ENCODE measurements at regions of chr11 and their contacts with region 1.

Region 1: GRCh38 chr11:23540101-23540561 is 679.9 kb upstream of the CCDC179 start:
- DNase-seq: peak; percentile 53
- ATAC-seq: peak; percentile 91
- H3K4me3 ChIP-seq: no peak overlapping the region
- H3K27ac ChIP-seq: peak overlapping the region; percentile 62; the same call in 1 of the 2 replicates
- H3K4me1 ChIP-seq: peaks cover 6% of the 10 kb centered on the region; the same call in 1 of the 2 replicates
- H3K27me3 ChIP-seq: no peaks in the 10 kb centered on the region
- CTCF ChIP-seq: peak; percentile 75
- POLR2A ChIP-seq: no peak
- RAD21 ChIP-seq: peak; percentile 76

Region 2: GRCh38 chr11:22875869-22876473 is 664.2 kb before region 1 on chr11:
- CTCF ChIA-PET with region 1: no interaction called
- POLR2A ChIA-PET with region 1: no interaction called
- dilution Hi-C with region 1: no loop called
- in situ Hi-C with region 1: no loop called
- intact Hi-C with region 1: loop called (anchors 5 kb)
- DNase-seq: peak; percentile 89
- ATAC-seq: peak; percentile 79
- H3K4me3 ChIP-seq: no peak overlapping the region
- H3K27ac ChIP-seq: no peak overlapping the region
- H3K4me1 ChIP-seq: peaks cover 4% of the 10 kb centered on the region
- H3K27me3 ChIP-seq: no peaks in the 10 kb centered on the region
- CTCF ChIP-seq: peak; percentile 99
- POLR2A ChIP-seq: no peak
- RAD21 ChIP-seq: peak; percentile 90

Region 3: DNA sequence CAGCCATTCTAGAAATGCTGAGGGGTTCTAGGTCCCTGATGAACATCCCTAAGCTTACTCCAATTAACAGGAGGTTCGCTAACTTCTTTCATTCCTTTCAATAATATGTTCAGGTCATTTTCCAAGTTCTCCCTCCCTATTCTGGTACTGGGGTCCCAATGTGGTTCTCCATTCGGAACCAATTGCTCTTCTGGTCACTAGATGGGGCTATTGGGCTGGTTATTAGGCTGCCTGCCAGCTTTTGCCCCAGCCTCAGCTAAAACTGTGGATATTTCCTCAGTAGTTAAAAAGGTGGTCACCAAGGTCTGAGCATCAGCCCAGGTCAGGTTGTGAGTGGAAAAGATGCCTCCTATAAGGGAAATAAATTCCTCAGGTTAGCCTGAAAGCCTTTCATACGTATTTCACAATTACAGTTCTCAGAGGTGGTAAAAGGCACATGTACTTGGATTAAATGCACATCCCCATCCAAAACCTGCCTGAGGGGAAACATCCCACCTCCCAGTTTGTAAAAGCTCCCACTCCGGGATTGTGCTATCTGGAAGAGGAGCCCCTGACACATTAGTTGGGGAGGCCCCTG is 518.8 kb before region 1 on chr11:
- CTCF ChIA-PET with region 1: no interaction called
- POLR2A ChIA-PET with region 1: no interaction called
- dilution Hi-C with region 1: no loop called
- in situ Hi-C with region 1: no loop called
- intact Hi-C with region 1: loop called (anchors 10 kb)
- DNase-seq: peak; percentile 51
- ATAC-seq: peak; percentile 86
- H3K4me3 ChIP-seq: no peak overlapping the region
- H3K27ac ChIP-seq: no peak overlapping the region
- H3K4me1 ChIP-seq: 0 out of 2 replicates have a peak, but pooled peaks cover 3% of the 10 kb centered on the region
- H3K27me3 ChIP-seq: no peaks in the 10 kb centered on the region
- CTCF ChIP-seq: peak; percentile 81
- POLR2A ChIP-seq: 0 out of 2 replicates have a peak, but pooled peaks have one; percentile 27
- RAD21 ChIP-seq: peak; percentile 85

Region 4: DNA sequence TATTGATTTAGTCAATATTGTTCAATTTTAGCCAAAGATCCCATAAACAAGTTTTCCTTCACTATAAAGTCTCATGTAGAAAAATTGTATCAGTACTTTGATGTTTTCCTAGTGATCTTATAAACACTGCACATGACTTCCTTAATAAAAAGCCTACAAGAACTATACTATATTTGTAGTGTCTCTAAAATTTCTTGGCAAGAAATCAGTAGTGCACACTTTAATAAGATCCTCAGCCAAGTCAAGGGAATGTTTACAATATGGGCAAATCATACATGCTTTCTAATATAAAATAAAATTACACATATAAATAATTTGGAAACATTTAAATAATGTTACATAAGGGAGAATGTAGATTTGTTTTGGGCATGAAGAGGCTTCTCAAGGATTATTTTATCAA is 476.9 kb before region 1 on chr11:
- CTCF ChIA-PET with region 1: no interaction called
- POLR2A ChIA-PET with region 1: no interaction called
- dilution Hi-C with region 1: no loop called
- in situ Hi-C with region 1: no loop called
- intact Hi-C with region 1: no loop called
- DNase-seq: peak; percentile 3
- ATAC-seq: no peak
- H3K4me3 ChIP-seq: no peak overlapping the region
- H3K27ac ChIP-seq: no peak overlapping the region
- H3K4me1 ChIP-seq: peaks cover 2% of the 10 kb centered on the region; the same call in 1 of the 2 replicates
- H3K27me3 ChIP-seq: no peaks in the 10 kb centered on the region
- CTCF ChIP-seq: no peak
- POLR2A ChIP-seq: no peak
- RAD21 ChIP-seq: no peak

Region 5: DNA sequence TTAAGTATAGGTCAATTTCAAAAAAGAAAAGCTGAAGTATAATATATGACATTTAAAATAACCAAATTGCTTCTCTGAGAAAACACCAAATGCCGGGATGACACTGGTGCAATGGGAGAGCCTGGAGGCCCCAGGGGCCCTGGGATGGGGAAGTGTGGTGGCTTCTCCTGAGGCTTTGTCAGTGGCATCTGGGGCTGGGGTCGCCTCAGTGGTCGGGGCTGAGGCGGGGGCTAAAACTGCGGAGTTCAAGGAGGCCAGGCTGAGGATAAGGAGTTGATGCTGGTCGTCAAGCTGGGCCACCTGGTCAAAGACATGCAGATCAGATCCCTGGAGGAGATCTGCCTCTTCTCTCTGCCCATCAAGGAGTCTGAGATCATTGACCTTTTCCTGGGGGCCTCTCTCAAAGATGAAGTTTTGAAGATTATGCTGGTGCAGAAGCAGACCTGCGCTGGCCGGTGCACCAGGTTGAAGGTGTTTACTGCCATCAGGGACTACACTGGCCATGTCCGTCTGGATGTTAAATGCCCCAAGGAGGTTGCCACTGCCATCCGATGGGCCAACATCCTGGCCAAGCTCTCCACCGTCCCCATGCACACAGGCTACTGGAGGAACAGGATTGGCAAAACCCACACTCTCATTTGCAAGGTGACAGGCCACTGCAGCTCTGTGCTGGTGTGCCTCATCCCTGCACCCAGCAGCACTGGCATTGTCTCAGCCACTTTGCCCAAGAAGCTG is 19.7 kb before region 1 on chr11:
- CTCF ChIA-PET with region 1: no interaction called
- POLR2A ChIA-PET with region 1: no interaction called
- dilution Hi-C with region 1: no loop called
- in situ Hi-C with region 1: no loop called
- intact Hi-C with region 1: no loop called
- DNase-seq: no peak
- ATAC-seq: no peak
- H3K4me3 ChIP-seq: no peak overlapping the region
- H3K27ac ChIP-seq: no peak overlapping the region
- H3K4me1 ChIP-seq: no peaks in the 10 kb centered on the region
- H3K27me3 ChIP-seq: no peaks in the 10 kb centered on the region
- CTCF ChIP-seq: no peak
- POLR2A ChIP-seq: no peak
- RAD21 ChIP-seq: no peak

Region 6: DNA sequence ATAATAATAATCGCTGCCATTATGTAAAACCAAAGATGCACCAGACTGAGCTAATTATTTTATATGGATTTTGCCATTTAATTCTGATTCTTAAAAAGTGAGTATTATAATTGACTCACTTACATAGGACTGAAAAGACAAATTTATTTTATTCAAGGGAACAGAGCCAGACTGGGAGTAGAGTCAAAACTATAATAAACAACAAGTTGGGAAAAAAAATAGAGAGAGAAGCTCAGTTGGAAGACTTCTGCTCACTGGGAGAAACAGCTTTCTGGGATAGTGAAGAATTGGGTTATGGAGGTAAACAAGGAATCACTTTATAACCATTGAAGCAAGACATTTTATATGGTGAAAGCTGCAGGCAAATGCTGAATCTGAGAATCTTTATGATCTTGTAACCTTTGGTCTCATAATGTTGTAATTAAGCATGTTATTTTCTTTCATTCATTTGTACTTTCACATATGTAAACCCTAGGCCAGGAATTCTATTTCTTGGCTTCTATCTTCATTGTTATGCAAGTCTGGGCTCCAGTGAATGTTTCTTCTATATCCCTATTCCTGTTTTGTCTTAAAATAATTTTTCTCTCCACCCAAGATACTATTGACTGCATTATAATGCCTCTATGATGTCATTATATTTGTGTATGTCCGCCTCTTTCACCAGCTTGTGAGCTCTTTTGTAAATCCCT is 45.4 kb after region 1 on chr11:
- CTCF ChIA-PET with region 1: no interaction called
- POLR2A ChIA-PET with region 1: no interaction called
- dilution Hi-C with region 1: no loop called
- in situ Hi-C with region 1: no loop called
- intact Hi-C with region 1: loop called (anchors 5 kb)
- DNase-seq: peak; percentile 2
- ATAC-seq: peak; percentile 32
- H3K4me3 ChIP-seq: no peak overlapping the region
- H3K27ac ChIP-seq: 0 out of 2 replicates have a peak overlapping the region, but pooled peaks have one; percentile 7
- H3K4me1 ChIP-seq: no peaks in the 10 kb centered on the region
- H3K27me3 ChIP-seq: no peaks in the 10 kb centered on the region
- CTCF ChIP-seq: no peak
- POLR2A ChIP-seq: no peak
- RAD21 ChIP-seq: no peak

Region 7: DNA sequence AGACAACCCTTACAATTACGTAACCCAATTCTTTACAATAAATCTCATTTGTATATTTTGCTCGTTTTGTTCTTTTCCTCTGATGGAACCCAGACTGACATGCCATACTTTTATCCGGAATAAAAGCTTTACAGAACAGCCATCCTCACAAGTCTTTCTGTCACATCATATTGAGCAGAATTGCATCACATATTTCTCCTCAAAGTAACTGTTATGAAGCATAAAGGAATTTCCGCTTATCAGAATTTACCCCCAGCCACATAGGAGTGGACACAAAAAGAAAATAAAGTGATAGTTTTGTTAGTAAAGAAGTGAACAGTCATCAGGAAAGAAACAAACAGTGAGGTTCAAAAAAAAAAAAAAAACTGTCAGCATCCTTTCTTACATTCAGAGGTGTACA is 417.2 kb after region 1 on chr11:
- CTCF ChIA-PET with region 1: no interaction called
- POLR2A ChIA-PET with region 1: no interaction called
- dilution Hi-C with region 1: no loop called
- in situ Hi-C with region 1: no loop called
- intact Hi-C with region 1: loop called (anchors 5 kb)
- DNase-seq: peak; percentile 65
- ATAC-seq: no peak
- H3K4me3 ChIP-seq: no peak overlapping the region
- H3K27ac ChIP-seq: no peak overlapping the region
- H3K4me1 ChIP-seq: peaks cover 6% of the 10 kb centered on the region; the same call in 1 of the 2 replicates
- H3K27me3 ChIP-seq: no peaks in the 10 kb centered on the region
- CTCF ChIP-seq: no peak
- POLR2A ChIP-seq: no peak
- RAD21 ChIP-seq: no peak

Region 8: GRCh38 chr11:24234822-24235508 is 694.8 kb after region 1 on chr11:
- CTCF ChIA-PET with region 1: no interaction called
- POLR2A ChIA-PET with region 1: no interaction called
- dilution Hi-C with region 1: no loop called
- in situ Hi-C with region 1: no loop called
- intact Hi-C with region 1: loop called (anchors 5 kb)
- DNase-seq: peak; percentile 79
- ATAC-seq: peak; percentile 64
- H3K4me3 ChIP-seq: no peak overlapping the region
- H3K27ac ChIP-seq: no peak overlapping the region; the same call in 1 of the 2 replicates
- H3K4me1 ChIP-seq: peaks cover 8% of the 10 kb centered on the region
- H3K27me3 ChIP-seq: no peaks in the 10 kb centered on the region
- CTCF ChIP-seq: peak; percentile 56
- POLR2A ChIP-seq: no peak
- RAD21 ChIP-seq: peak; percentile 73

Region 9: DNA sequence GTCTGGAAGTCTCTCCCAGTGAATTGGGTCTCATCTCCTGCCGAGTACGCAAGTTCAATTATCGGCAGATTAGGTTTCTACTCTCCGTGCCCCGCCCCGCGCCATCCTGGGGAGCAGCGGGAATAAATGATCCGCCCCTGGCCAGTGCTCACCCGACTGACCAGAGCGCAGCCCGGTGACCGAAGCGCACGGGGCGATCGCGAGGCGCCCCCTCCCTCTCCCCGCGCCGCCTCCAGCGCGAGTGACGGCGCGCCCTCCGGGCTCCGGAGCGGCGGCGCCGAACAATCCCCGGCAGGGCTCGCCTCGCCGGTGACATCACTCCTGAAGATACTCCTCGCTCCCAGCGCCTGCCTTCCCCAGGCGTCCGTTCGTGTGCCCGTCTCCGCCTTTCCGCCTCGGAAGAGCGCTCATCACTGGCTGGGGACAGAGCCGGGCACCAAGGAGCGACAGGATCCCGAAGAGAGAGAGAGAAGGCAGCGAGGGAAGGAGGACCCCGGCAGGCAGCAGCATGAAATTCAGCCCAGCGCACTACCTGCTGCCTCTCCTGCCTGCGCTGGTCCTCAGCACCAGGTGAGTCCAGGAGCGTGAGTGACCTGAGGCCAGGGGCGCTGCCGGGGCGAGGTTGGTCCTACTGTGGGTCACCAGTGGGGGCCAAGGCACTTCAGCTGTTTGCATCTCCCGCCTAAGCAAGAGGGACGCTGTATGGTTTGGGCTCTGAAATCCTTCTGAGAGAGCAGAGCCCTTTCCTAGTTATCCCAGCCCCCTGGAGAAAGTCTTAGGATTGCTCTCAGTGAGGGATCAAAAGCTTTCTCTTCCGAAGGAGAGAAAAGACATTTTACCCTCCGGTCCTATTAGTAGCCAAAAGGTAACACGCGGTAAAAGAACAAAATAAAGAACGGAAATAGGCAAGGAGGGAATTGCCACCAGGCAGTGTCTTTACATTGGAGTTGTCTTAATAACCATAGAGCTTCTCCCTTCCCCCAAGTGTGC is 956.9 kb after region 1 on chr11 and contains the start of gene LUZP2:
- CTCF ChIA-PET with region 1: no interaction called
- POLR2A ChIA-PET with region 1: no interaction called
- dilution Hi-C with region 1: no loop called
- in situ Hi-C with region 1: loop called (anchors 10 kb)
- intact Hi-C with region 1: no loop called
- DNase-seq: peak; percentile 51
- ATAC-seq: peak; percentile 96
- H3K4me3 ChIP-seq: peak within 1 kb of the TSS; percentile 61
- H3K27ac ChIP-seq: peak within 1 kb of the TSS; percentile 2; the same call in 1 of the 2 replicates
- H3K4me1 ChIP-seq: no peaks in the 10 kb centered on the region; the same call in 1 of the 2 replicates
- H3K27me3 ChIP-seq: no peaks in the 10 kb centered on the region
- CTCF ChIP-seq: no peak
- POLR2A ChIP-seq: no peak
- RAD21 ChIP-seq: no peak; the same call in 1 of the 2 replicates
- total RNA-seq, gene LUZP2: 2.0 and 2.2 TPM in 2 replicates

Measured in IMR-90 (cell line).